ENCODE measurements at regions of chr3 and their contacts with region 1.

Region 1: GRCh38 chr3:49120438-49121131 is at the start of gene USP19:
- DNase-seq: peak; percentile 91 to 98
- ATAC-seq: peak; percentile 93 to 94 (median 93)
- H3K4me3 ChIP-seq: peak within 1 kb of the TSS; percentile 85
- H3K4me3 Mint-ChIP-seq: peak within 1 kb of the TSS; percentile 77
- H3K27ac ChIP-seq: peak within 1 kb of the TSS; percentile 95
- H3K27ac Mint-ChIP-seq: peak within 1 kb of the TSS; percentile 81 to 87
- H3K4me1 ChIP-seq: peaks cover 24% of the 10 kb centered on the region
- H3K4me1 Mint-ChIP-seq: peaks cover 5 to 12% of the 10 kb centered on the region in 2 donors
- H3K27me3 ChIP-seq: no peaks in the 10 kb centered on the region
- H3K27me3 Mint-ChIP-seq: no peaks in the 10 kb centered on the region
- CTCF ChIP-seq: no peak
- total RNA-seq, gene USP19: 68.6 to 71.5 (median 68.6) TPM

Region 2: DNA sequence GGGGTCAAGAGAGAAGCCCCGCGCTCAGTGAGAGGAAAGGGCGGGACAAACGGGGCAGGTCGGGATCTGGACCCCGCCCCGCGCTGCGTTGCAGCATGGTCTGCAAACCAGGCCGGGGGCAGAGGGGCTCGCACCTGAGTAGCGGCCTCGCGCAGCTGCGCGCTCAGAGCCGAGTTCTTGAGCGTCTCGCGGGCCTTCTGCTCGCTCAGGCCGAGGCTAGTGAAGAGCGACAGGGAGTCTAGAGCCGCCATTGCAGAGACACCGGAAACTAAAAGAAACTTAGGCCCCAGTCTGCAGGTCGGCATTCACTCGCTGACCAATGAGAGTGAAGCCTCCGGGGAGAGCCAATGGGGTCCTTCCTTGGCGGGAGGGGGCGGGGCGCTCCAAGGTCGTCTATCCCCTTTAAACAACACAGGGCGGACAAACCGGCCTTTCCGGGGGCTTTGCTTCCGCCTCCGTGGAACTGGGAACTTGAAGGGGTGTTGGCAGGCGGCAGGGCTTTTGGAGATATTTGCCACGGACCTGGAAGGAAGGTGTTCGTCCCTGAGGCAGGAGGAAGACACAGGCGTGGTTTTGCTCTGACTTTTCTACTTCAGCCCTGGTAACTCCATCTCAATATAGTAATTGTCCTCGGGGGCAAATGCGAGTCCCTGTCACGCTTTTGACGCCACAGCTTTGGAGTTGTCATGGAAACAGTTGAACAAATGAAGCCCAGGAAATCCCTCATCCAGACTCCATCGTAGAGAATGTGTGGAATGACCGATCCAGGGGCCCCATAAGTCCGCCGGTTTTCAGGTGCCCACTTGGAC is 15.9 kb before region 1 on chr3 and contains the start of gene QARS1:
- intact Hi-C with region 1: loop called (anchors 1 kb)
- DNase-seq: peak; percentile 87 to 93
- ATAC-seq: peak; percentile 98 to 99 (median 99)
- H3K4me3 ChIP-seq: peak within 1 kb of the TSS; percentile 92
- H3K4me3 Mint-ChIP-seq: peak within 1 kb of the TSS; percentile 99
- H3K27ac ChIP-seq: peak within 1 kb of the TSS; percentile 73
- H3K27ac Mint-ChIP-seq: peak within 1 kb of the TSS; percentile 95 to 99
- H3K4me1 ChIP-seq: peaks cover 19% of the 10 kb centered on the region
- H3K4me1 Mint-ChIP-seq: peaks cover 30 to 35% of the 10 kb centered on the region in 2 donors
- H3K27me3 ChIP-seq: no peaks in the 10 kb centered on the region
- H3K27me3 Mint-ChIP-seq: no peaks in the 10 kb centered on the region
- CTCF ChIP-seq: no peak
- total RNA-seq, gene QARS1: 250 to 280 (median 258) TPM